ENCODE measurements at regions of chr15 and their contacts with region 1.

Region 1: GRCh38 chr15:90482124-90483011 is 47.4 kb upstream of the CRTC3 start:
- DNase-seq: peak; percentile 54
- H3K4me3 ChIP-seq: no peak overlapping the region; a peak in 1 of 4 replicates
- H3K27ac ChIP-seq: peak overlapping the region in 1 of 2 experiments; percentile 9; a peak in 3 of 4 replicates
- H3K4me1 ChIP-seq: peaks cover 0 to 17% of the 10 kb centered on the region in 2 experiments; a peak in 3 of 4 replicates
- H3K27me3 ChIP-seq: no peaks in the 10 kb centered on the region
- CTCF ChIP-seq: peak; percentile 89
- EP300 ChIP-seq: no peak
- RAD21 ChIP-seq: peak; percentile 92

Region 2: GRCh38 chr15:90325726-90326125 is 156.6 kb before region 1 on chr15:
- CTCF ChIA-PET with region 1: interaction called, 116 read pairs
- POLR2A ChIA-PET with region 1: no interaction called
- DNase-seq: no peak
- H3K4me3 ChIP-seq: no peak overlapping the region
- H3K27ac ChIP-seq: no peak overlapping the region
- H3K4me1 ChIP-seq: no peaks in the 10 kb centered on the region
- H3K27me3 ChIP-seq: no peaks in the 10 kb centered on the region
- CTCF ChIP-seq: no peak
- EP300 ChIP-seq: no peak
- RAD21 ChIP-seq: no peak

Region 3: DNA sequence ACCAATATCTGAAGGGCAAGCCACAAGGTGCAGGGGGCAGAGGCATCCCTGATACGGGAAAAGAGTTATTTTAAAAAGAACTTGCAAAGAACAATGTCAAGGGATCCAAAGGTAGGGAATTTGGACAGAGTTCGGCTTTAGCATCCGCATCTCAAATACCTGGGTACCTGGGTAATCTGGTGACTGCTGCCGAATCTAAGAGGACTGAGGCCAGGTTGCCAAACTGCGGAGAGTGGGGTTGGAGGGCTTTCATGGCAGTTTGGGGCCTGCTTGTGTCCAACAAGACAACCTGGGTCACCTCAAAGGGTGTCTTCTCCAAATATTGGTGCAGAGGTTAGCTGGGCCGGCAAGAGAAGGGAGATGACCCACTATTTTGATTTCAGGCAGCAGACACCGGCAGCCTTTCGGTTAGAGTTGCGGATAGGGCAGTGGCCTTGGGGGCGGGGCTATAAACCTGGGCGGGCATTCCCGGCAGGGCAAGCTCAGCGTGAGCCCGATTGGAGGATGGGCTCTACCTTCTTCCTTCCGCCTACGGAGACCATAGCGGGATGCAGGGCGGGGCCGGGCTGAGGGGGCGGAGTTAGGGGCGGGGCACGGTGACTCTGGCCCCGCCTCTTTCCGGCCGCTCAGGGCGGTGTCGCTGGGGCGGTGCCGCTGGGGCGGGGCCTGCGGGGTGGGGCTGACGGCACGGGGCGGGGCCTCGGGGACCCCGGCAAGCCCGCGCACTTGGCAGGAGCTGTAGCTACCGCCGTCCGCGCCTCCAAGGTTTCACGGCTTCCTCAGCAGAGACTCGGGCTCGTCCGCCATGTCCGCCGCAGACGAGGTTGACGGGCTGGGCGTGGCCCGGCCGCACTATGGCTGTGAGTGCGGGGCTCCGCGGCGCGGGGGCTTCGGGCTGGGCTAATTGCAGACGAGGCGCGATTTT is 94.6 kb before region 1 on chr15 and contains the start of gene IQGAP1:
- CTCF ChIA-PET with region 1: interaction called, 10 read pairs
- POLR2A ChIA-PET with region 1: no interaction called
- DNase-seq: peak; percentile 99
- H3K4me3 ChIP-seq: peak within 1 kb of the TSS; percentile 77 to 95
- H3K27ac ChIP-seq: peak within 1 kb of the TSS; percentile 80 to 82
- H3K4me1 ChIP-seq: peaks cover 3 to 16% of the 10 kb centered on the region in 2 experiments; a peak in 3 of 4 replicates
- H3K27me3 ChIP-seq: no peaks in the 10 kb centered on the region
- CTCF ChIP-seq: no peak
- EP300 ChIP-seq: no peak
- RAD21 ChIP-seq: no peak
- polyA plus RNA-seq, gene IQGAP1: 51.8 and 56.5 TPM in 2 replicates

Region 4: DNA sequence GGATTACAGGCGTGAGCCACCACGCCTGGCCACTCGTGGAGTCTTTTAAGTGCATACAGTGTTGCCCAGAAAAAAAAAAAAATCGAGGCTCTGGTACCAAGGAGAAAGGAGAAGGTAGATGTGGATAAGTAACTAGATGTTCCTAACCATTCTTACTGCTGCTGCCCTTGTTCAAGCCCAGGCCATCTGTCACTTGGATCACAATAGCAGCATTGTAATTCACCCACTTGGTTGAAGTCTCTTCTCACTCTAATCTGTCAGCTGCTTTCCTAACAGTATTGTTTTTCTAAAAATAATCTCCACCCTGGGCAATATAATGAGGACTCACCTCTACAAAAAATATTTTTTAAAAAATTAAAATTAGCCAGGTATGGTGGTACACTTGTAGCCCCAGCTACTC is 10.6 kb before region 1 on chr15:
- CTCF ChIA-PET with region 1: interaction called, 23 read pairs
- POLR2A ChIA-PET with region 1: interaction called, 3 read pairs
- DNase-seq: no peak
- H3K4me3 ChIP-seq: no peak overlapping the region
- H3K27ac ChIP-seq: no peak overlapping the region
- H3K4me1 ChIP-seq: no peaks in the 10 kb centered on the region
- H3K27me3 ChIP-seq: no peaks in the 10 kb centered on the region
- CTCF ChIP-seq: no peak
- EP300 ChIP-seq: no peak
- RAD21 ChIP-seq: no peak

Region 5: DNA sequence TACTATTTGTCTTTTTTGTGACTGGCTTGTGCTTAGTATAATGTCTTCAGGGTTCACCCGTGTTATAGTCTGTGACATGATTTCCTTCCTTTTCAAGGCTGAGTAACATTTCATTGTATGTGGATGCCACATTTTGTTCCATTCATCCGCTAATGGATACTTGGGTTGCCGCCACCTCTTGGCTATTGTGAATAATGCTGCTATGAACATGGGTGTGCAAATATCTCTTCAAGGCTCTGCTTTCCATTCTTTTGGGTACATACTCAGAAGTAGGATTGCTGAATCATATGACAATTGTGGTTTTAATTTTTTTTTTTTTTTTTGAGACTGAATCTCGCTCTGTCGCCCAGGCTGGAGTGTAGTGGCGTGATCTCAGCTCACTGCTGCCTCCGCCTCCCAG is 62.7 kb after region 1 on chr15:
- CTCF ChIA-PET with region 1: no interaction called
- POLR2A ChIA-PET with region 1: no interaction called
- DNase-seq: no peak
- H3K4me3 ChIP-seq: no peak overlapping the region
- H3K27ac ChIP-seq: no peak overlapping the region
- H3K4me1 ChIP-seq: peaks cover 0 to 7% of the 10 kb centered on the region in 2 experiments; a peak in 2 of 4 replicates
- H3K27me3 ChIP-seq: no peaks in the 10 kb centered on the region
- CTCF ChIP-seq: peak; percentile 26; the same call in 1 of the 2 replicates
- EP300 ChIP-seq: no peak
- RAD21 ChIP-seq: no peak

Measured in SK-N-SH (cell line).